ENCODE measurements at regions of chr22 and their contacts with region 1.

Region 1: DNA sequence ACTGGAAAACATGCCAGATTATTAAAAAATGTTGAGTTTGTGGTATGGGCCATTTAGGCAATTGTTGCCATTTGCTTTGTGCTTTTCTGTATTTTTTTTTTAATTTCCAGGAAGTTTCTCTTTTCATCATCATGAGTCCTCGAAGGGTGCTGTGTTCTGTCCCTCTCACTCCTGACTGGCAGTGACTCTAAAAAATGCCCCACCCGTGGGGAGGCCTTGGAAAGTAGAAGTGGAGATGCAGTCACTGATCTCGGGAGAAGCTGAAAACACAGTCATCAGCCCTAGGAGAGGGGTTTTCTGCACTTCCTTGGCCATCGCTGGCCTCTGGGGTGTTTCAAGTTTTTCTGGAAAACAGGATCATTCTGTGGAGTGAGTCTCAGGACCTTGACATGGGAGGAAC is 98.5 kb upstream of the GRK3 start:
- DNase-seq: no peak
- H3K4me3 Mint-ChIP-seq: no peak overlapping the region
- H3K27ac Mint-ChIP-seq: peak overlapping the region; percentile 65
- H3K4me1 Mint-ChIP-seq: peaks cover 20% of the 10 kb centered on the region
- H3K27me3 Mint-ChIP-seq: no peaks in the 10 kb centered on the region

Region 2: DNA sequence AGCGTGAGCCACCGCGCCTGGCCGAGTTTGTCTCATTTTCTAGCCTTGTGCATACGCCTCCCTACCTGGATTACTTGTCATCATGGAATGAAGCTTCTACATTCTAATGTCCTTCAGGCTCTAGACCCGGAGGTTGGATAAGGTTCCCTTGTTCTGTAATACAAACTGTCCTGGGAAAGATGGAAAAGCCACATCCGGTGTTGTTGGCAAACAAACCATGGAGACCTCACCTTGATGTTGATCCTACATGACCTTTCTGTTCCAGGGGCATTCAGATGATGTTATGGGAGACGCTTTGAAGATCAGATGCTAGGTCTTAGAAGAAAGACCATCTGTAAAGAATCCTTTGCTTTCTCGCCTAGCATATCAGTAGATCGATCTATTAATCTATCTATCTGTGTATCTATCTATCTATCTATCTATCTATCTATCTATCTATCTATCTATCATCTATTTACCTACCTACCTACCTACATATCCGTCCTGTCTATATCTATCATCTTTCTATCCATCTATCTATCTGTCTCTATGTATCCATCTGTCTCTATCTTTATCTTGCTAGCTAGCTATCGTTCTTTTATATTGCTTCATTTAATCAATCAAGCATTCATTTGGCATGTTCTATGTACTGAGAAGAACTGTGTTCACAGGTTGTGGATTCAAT is 52.2 kb after region 1 on chr22:
- intact Hi-C with region 1: no loop called
- DNase-seq: no peak
- H3K4me3 Mint-ChIP-seq: no peak overlapping the region
- H3K27ac Mint-ChIP-seq: no peak overlapping the region
- H3K4me1 Mint-ChIP-seq: no peaks in the 10 kb centered on the region
- H3K27me3 Mint-ChIP-seq: peaks cover 2% of the 10 kb centered on the region

Region 3: DNA sequence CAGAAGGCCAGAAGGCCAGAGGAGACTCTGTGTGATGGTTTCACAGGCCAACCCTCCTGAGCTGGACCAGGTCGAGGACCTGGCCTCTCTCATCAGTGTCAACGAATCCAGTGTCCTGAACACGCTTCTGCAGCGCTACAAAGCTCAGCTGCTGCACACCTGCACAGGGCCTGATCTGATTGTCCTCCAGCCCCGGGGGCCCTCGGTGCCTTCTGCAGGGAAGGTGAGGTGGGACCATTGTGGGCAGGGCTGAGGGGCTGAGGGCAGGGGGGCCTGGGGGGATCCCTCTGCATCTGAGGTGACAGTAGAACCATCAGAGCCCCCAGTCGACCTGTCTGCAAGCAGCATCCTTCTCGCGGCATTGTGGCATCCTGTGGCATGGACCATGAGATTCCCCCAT is 306.3 kb after region 1 on chr22:
- intact Hi-C with region 1: loop called (anchors 1 kb)
- DNase-seq: no peak
- H3K4me3 Mint-ChIP-seq: no peak overlapping the region
- H3K27ac Mint-ChIP-seq: peak overlapping the region; percentile 84
- H3K4me1 Mint-ChIP-seq: peaks cover 32% of the 10 kb centered on the region
- H3K27me3 Mint-ChIP-seq: no peaks in the 10 kb centered on the region